Activated CD8-positive, alpha-beta memory T cell treated with anti-CD3 and anti-CD28 coated beads, Interleukin-2, amount 10 ng/mL, durations not matched to agents 7 days and 5 days (primary cell): ENCODE measurements at regions of chr11 and their contacts with region 1.

Region 1: DNA sequence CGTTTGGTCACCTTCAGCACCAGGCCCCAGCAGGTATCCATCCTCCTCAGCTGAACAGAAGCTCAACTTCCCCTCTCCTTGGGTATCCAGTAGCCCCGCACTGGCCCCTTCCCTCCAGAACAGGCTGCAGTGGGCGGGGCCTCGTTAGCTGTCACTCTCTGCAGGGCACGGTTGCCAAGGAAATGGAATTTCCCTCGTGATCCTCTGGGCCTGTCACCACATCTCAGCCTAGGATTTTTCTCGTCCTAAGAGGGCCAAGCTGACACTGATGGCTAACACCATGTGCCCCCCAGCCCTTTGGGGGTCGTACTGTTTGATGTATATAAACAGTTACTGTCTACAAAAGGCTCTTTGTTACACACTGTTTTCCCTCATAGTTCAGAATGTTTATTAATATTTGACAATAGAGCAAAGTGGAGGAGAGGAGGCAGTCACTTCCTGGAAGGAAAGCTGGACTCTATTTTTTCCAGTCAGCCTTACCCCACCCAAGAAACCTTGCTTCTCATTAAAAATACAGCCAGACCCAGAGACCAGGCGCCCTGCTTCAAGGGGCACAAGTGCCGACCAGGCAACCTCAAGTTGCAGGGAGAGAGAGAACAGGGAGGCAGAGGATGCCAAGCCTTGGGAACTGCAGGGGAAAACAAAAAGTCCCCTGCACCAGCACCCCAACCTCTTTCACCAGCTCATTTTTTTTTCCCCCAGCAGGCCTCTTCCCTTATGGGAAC is 44.5 kb downstream of the FEZ1 start:
- DNase-seq: no peak
- ATAC-seq: no peak
- H3K4me3 Mint-ChIP-seq: no peak overlapping the region
- H3K27ac Mint-ChIP-seq: no peak overlapping the region
- H3K4me1 Mint-ChIP-seq: peaks cover 1% of the 10 kb centered on the region
- H3K27me3 Mint-ChIP-seq: no peaks in the 10 kb centered on the region

Region 2: GRCh38 chr11:125429166-125429707 is 22.3 kb before region 1 on chr11:
- CTCF ChIA-PET with region 1: interaction called, 13 read pairs
- DNase-seq: peak; percentile 68
- ATAC-seq: peak; percentile 48
- H3K4me3 Mint-ChIP-seq: no peak overlapping the region
- H3K27ac Mint-ChIP-seq: no peak overlapping the region
- H3K4me1 Mint-ChIP-seq: no peaks in the 10 kb centered on the region
- H3K27me3 Mint-ChIP-seq: peaks cover 8% of the 10 kb centered on the region